Activated CD4-positive, alpha-beta T cell treated with anti-CD3 and anti-CD28 coated beads for 36 hours (primary cell): ENCODE measurements at regions of chr10 and their contacts with region 1.

Region 1: DNA sequence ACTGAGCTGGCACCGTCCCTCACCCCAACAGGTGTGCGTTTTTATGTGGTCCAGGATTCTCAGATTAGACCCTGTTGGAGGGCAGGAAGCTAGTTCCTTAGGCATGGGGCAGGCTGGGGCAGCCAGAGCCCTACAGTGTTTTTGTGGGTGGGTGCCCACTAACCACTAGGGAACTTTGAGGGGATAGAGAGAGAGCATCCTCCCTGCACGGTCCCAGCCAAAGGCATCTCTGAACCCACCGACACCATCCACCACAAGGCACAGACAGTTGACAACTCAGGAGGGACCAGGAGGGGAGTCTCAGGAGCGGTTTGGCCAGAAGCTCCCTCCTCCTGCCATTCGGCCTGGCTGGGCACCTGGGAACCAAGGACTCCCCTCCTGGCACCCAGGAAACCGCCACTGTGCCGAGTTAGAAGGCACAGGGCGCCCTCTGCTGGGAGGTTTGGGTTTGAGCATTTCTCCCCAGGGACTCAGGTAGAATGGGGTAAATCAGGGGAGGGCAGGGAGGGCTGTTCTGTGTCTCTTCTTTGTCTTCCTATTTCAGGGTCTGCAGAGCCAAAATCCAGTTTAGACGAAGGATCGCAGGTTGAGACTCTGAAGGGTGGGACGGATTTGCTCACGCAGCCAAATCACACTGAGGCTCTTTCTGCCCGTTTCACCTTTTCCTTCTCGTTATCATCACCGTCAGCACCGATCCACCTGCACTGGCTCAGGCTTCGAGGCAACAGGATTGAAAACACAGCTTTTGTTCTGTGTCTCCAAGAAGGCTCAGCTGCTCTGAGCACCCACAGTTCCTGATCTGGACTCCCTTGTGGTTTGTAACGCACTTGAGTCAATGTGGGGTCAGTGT is 84.8 kb upstream of the COL13A1 start:
- DNase-seq: peak; percentile 82
- ATAC-seq: peak; percentile 69
- H3K4me3 Mint-ChIP-seq: no peak overlapping the region
- H3K27ac Mint-ChIP-seq: no peak overlapping the region
- H3K4me1 Mint-ChIP-seq: no peaks in the 10 kb centered on the region
- H3K27me3 Mint-ChIP-seq: no peaks in the 10 kb centered on the region

Region 2: GRCh38 chr10:68756766-68757165 is 960.2 kb before region 1 on chr10:
- CTCF ChIA-PET with region 1: no interaction called
- POLR2A ChIA-PET with region 1: no interaction called
- intact Hi-C with region 1: no loop called
- DNase-seq: no peak
- ATAC-seq: no peak
- H3K4me3 Mint-ChIP-seq: no peak overlapping the region
- H3K27ac Mint-ChIP-seq: no peak overlapping the region
- H3K4me1 Mint-ChIP-seq: no peaks in the 10 kb centered on the region
- H3K27me3 Mint-ChIP-seq: no peaks in the 10 kb centered on the region

Region 3: GRCh38 chr10:69644658-69645295 is 72.2 kb before region 1 on chr10:
- CTCF ChIA-PET with region 1: interaction called, 44 read pairs
- POLR2A ChIA-PET with region 1: no interaction called
- intact Hi-C with region 1: loop called (anchors 1 kb)
- DNase-seq: peak; percentile 73
- ATAC-seq: peak; percentile 30
- H3K4me3 Mint-ChIP-seq: no peak overlapping the region
- H3K27ac Mint-ChIP-seq: no peak overlapping the region
- H3K4me1 Mint-ChIP-seq: no peaks in the 10 kb centered on the region
- H3K27me3 Mint-ChIP-seq: no peaks in the 10 kb centered on the region

Region 4: GRCh38 chr10:69696073-69696731 is 20.7 kb before region 1 on chr10:
- CTCF ChIA-PET with region 1: interaction called, 7 read pairs
- POLR2A ChIA-PET with region 1: no interaction called
- intact Hi-C with region 1: loop called in 1 of 2 experiments (anchors 1 kb)
- DNase-seq: peak; percentile 33
- ATAC-seq: peak; percentile 55
- H3K4me3 Mint-ChIP-seq: no peak overlapping the region
- H3K27ac Mint-ChIP-seq: no peak overlapping the region
- H3K4me1 Mint-ChIP-seq: no peaks in the 10 kb centered on the region
- H3K27me3 Mint-ChIP-seq: peaks cover 19% of the 10 kb centered on the region

Region 5: GRCh38 chr10:69728335-69728870 is 11.5 kb after region 1 on chr10:
- CTCF ChIA-PET with region 1: interaction called, 13 read pairs
- POLR2A ChIA-PET with region 1: no interaction called
- intact Hi-C with region 1: no loop called
- DNase-seq: no peak
- ATAC-seq: peak; percentile 82
- H3K4me3 Mint-ChIP-seq: no peak overlapping the region
- H3K27ac Mint-ChIP-seq: no peak overlapping the region
- H3K4me1 Mint-ChIP-seq: peaks cover 2% of the 10 kb centered on the region
- H3K27me3 Mint-ChIP-seq: peaks cover 5% of the 10 kb centered on the region

Region 6: GRCh38 chr10:69800109-69800508 is 83.2 kb after region 1 on chr10:
- CTCF ChIA-PET with region 1: no interaction called
- POLR2A ChIA-PET with region 1: no interaction called
- intact Hi-C with region 1: no loop called
- DNase-seq: peak; percentile 32
- ATAC-seq: no peak
- H3K4me3 Mint-ChIP-seq: no peak overlapping the region
- H3K27ac Mint-ChIP-seq: no peak overlapping the region
- H3K4me1 Mint-ChIP-seq: peaks cover 8% of the 10 kb centered on the region
- H3K27me3 Mint-ChIP-seq: peaks cover 43% of the 10 kb centered on the region

Region 7: DNA sequence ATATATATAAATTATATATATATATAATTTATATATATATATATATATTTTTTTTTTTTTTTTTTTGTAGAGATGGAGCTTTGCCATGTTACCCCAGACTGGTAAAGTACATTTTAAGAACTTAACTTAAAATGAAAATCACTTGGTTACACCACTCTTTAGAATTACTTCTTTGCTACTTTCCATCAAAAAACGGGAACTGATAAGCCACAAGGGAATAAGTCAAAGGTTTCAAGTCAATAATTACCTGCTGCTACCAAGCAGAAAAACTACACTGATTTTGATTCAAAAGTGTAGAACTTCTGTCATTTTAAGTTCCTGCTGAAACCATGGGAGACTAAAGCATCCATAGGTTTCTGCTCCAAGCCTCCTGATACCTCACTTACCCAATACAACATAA is 504.1 kb after region 1 on chr10:
- CTCF ChIA-PET with region 1: no interaction called
- POLR2A ChIA-PET with region 1: no interaction called
- intact Hi-C with region 1: no loop called
- DNase-seq: no peak
- ATAC-seq: no peak
- H3K4me3 Mint-ChIP-seq: no peak overlapping the region
- H3K27ac Mint-ChIP-seq: no peak overlapping the region
- H3K4me1 Mint-ChIP-seq: peaks cover 36% of the 10 kb centered on the region
- H3K27me3 Mint-ChIP-seq: no peaks in the 10 kb centered on the region